Activated B cell treated with CpG ODN at 0.5 μM for 24 hours (primary cell): ENCODE measurements at regions of chr10 and their contacts with region 1.

Region 1: DNA sequence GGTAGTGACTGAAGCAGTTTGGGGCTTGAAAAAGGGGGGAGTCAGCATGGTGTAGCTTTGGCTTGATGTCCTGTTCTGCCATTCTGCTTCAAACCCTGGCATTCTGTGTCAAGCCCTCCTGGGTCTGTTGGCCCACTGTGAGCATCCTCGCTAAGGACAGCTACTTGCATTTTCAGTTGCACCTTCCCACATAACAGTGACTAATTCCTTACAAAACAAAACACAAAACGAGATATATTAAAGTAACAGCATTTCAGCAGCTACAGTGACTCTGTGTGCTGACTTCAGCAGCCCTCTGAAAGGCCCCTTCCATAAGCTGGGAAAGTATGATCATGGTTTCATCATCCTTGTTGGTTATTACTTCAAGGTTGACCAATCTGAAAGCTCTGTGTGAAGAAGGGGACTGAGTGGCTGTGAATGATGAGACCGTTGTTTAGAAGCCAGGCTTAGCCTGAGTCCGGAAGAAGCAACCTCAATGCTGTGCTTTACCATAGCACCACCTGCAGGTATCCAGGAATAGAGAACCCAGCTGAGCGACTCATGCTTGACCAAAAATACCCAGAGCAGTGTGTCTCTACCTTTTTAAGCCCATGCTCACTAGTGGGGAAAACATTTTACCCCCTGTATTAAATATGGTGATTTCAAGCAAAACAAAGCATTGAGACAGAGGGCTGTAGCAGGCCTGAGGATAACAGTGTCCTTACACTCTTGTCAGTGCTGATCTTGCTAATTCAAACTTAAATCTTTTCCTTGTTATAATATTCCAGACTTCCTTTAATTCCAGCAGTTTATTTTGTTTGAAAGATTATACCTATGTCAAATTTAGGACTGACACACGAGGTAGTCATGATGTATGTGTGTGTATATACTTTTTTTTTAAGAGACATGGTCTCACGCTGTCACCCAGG is 42.6 kb upstream of the CC2D2B start:
- DNase-seq: no peak
- ATAC-seq: peak; percentile 98
- H3K4me3 Mint-ChIP-seq: no peak overlapping the region
- H3K27ac Mint-ChIP-seq: peak overlapping the region; percentile 89
- H3K4me1 Mint-ChIP-seq: peaks cover 25% of the 10 kb centered on the region
- H3K27me3 Mint-ChIP-seq: no peaks in the 10 kb centered on the region
- CTCF ChIP-seq: no peak

Region 2: GRCh38 chr10:95430231-95430951 is 434.8 kb before region 1 on chr10:
- CTCF ChIA-PET with region 1: no interaction called
- POLR2A ChIA-PET with region 1: no interaction called
- intact Hi-C with region 1: loop called (anchors 1 kb)
- DNase-seq: peak; percentile 24
- ATAC-seq: peak; percentile 93
- H3K4me3 Mint-ChIP-seq: no peak overlapping the region
- H3K27ac Mint-ChIP-seq: no peak overlapping the region
- H3K4me1 Mint-ChIP-seq: no peaks in the 10 kb centered on the region
- H3K27me3 Mint-ChIP-seq: peaks cover 9% of the 10 kb centered on the region
- CTCF ChIP-seq: no peak

Region 3: GRCh38 chr10:95628786-95629185 is 236.4 kb before region 1 on chr10:
- CTCF ChIA-PET with region 1: no interaction called
- POLR2A ChIA-PET with region 1: no interaction called
- intact Hi-C with region 1: loop called (anchors 5 kb)
- DNase-seq: no peak
- ATAC-seq: no peak
- H3K4me3 Mint-ChIP-seq: no peak overlapping the region
- H3K27ac Mint-ChIP-seq: no peak overlapping the region
- H3K4me1 Mint-ChIP-seq: no peaks in the 10 kb centered on the region
- H3K27me3 Mint-ChIP-seq: no peaks in the 10 kb centered on the region
- CTCF ChIP-seq: no peak

Region 4: GRCh38 chr10:95656291-95657164 is 208.6 kb before region 1 on chr10 and contains the start of gene ALDH18A1:
- CTCF ChIA-PET with region 1: interaction called, 3 read pairs
- POLR2A ChIA-PET with region 1: no interaction called
- intact Hi-C with region 1: loop called (anchors 1 kb)
- DNase-seq: peak; percentile 94
- ATAC-seq: peak; percentile 96
- H3K4me3 Mint-ChIP-seq: peak within 1 kb of the TSS; percentile 98
- H3K27ac Mint-ChIP-seq: peak within 1 kb of the TSS; percentile 86
- H3K4me1 Mint-ChIP-seq: peaks cover 31% of the 10 kb centered on the region
- H3K27me3 Mint-ChIP-seq: no peaks in the 10 kb centered on the region
- CTCF ChIP-seq: no peak
- total RNA-seq, gene ALDH18A1: 45.9 and 53.0 TPM in 2 replicates

Region 5: GRCh38 chr10:95688648-95689047 is 176.5 kb before region 1 on chr10:
- CTCF ChIA-PET with region 1: interaction called, 171 read pairs
- POLR2A ChIA-PET with region 1: interaction called, 64 read pairs
- intact Hi-C with region 1: loop called (anchors 1 kb)
- DNase-seq: no peak
- ATAC-seq: no peak
- H3K4me3 Mint-ChIP-seq: no peak overlapping the region
- H3K27ac Mint-ChIP-seq: no peak overlapping the region
- H3K4me1 Mint-ChIP-seq: peaks cover 47% of the 10 kb centered on the region
- H3K27me3 Mint-ChIP-seq: no peaks in the 10 kb centered on the region
- CTCF ChIP-seq: no peak

Region 6: GRCh38 chr10:95741807-95742467 is 123.2 kb before region 1 on chr10:
- CTCF ChIA-PET with region 1: interaction called, 14 read pairs
- POLR2A ChIA-PET with region 1: interaction called, 5 read pairs
- intact Hi-C with region 1: no loop called
- DNase-seq: no peak
- ATAC-seq: peak; percentile 83
- H3K4me3 Mint-ChIP-seq: peak overlapping the region; percentile 85
- H3K27ac Mint-ChIP-seq: peak overlapping the region; percentile 99
- H3K4me1 Mint-ChIP-seq: peaks cover 55% of the 10 kb centered on the region
- H3K27me3 Mint-ChIP-seq: no peaks in the 10 kb centered on the region
- CTCF ChIP-seq: no peak

Region 7: GRCh38 chr10:96850825-96851224 is 985.7 kb after region 1 on chr10:
- CTCF ChIA-PET with region 1: no interaction called
- POLR2A ChIA-PET with region 1: no interaction called
- intact Hi-C with region 1: no loop called
- DNase-seq: no peak
- ATAC-seq: no peak
- H3K4me3 Mint-ChIP-seq: no peak overlapping the region
- H3K27ac Mint-ChIP-seq: no peak overlapping the region
- H3K4me1 Mint-ChIP-seq: peaks cover 48% of the 10 kb centered on the region
- H3K27me3 Mint-ChIP-seq: no peaks in the 10 kb centered on the region
- CTCF ChIP-seq: no peak